ENCODE measurements at regions of chrX and their contacts with region 1.

Region 1: GRCh38 chrX:108070891-108071290 is 20.5 kb downstream of the PSMD10 start:
- DNase-seq: no peak
- ATAC-seq: no peak
- H3K4me3 ChIP-seq: no peak overlapping the region
- H3K4me3 Mint-ChIP-seq: no peak overlapping the region
- H3K27ac ChIP-seq: no peak overlapping the region
- H3K27ac Mint-ChIP-seq: peak overlapping the region; percentile 39
- H3K4me1 ChIP-seq: no peaks in the 10 kb centered on the region
- H3K4me1 Mint-ChIP-seq: peaks cover 9% of the 10 kb centered on the region
- H3K27me3 ChIP-seq: no peaks in the 10 kb centered on the region
- H3K27me3 Mint-ChIP-seq: no peaks in the 10 kb centered on the region
- CTCF ChIP-seq: no peak

Region 2: DNA sequence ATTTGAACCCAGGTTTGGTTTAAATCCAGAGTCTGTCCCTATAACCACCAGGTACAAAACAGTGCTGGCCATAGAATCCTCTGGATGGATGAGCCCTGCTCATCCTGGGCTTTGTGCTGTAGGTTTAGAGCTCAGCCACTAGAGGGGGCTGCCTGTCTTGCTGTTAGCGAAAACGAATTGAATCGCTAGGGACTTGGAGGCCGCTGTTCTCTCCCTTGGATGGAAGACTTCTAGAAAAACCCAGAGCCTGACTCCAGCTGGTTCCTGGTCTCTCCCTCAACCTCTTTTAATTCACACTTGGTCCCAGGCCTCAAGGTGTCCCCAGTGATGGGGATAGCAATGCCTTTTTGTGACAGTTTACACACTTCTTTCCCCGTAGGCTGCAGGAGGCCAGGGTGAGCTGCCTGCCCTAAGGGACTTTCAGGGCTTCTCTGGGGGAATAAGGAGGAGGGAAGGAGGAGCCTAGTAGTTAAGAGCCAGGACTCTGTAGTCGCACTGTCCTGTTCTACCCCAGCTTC is 1176.4 kb before region 1 on chrX:
- CTCF ChIA-PET with region 1: no interaction called
- POLR2A ChIA-PET with region 1: no interaction called
- intact Hi-C with region 1: loop called (anchors 10 kb)
- DNase-seq: peak; percentile 12 to 67 (median 26)
- ATAC-seq: peak; percentile 62
- H3K4me3 ChIP-seq: no peak overlapping the region
- H3K4me3 Mint-ChIP-seq: no peak overlapping the region
- H3K27ac ChIP-seq: no peak overlapping the region
- H3K27ac Mint-ChIP-seq: no peak overlapping the region
- H3K4me1 ChIP-seq: no peaks in the 10 kb centered on the region
- H3K4me1 Mint-ChIP-seq: no peaks in the 10 kb centered on the region
- H3K27me3 ChIP-seq: peaks cover 0 to 3% of the 10 kb centered on the region in 2 experiments
- H3K27me3 Mint-ChIP-seq: peaks cover 21% of the 10 kb centered on the region
- CTCF ChIP-seq: peak; percentile 54

Region 3: DNA sequence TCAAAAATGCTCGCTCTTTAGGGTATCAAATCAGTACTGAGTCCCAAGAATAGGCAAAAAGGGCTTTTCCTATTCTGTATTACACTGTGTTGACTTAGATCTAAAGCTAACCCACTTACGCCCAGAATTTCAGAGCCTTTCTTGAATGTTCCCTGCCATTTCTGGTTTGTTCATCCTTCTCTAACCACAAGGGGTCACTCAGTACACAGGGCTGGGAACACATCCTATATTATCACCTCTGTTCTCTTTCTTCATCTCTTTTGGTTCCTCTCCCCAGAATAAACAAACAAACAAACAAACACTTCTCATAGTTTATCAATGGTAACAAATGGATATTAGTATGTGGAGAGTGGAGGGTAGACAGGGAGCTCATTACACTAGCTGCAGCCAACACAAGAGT is 1045.3 kb before region 1 on chrX:
- CTCF ChIA-PET with region 1: no interaction called
- POLR2A ChIA-PET with region 1: no interaction called
- intact Hi-C with region 1: loop called in 1 of 2 experiments (anchors 10 kb)
- DNase-seq: peak in 3 of 14 experiments; percentile 12 to 24 (median 23)
- ATAC-seq: no peak
- H3K4me3 ChIP-seq: no peak overlapping the region
- H3K4me3 Mint-ChIP-seq: no peak overlapping the region
- H3K27ac ChIP-seq: no peak overlapping the region
- H3K27ac Mint-ChIP-seq: no peak overlapping the region
- H3K4me1 ChIP-seq: no peaks in the 10 kb centered on the region
- H3K4me1 Mint-ChIP-seq: no peaks in the 10 kb centered on the region
- H3K27me3 ChIP-seq: no peaks in the 10 kb centered on the region
- H3K27me3 Mint-ChIP-seq: peaks cover 5% of the 10 kb centered on the region
- CTCF ChIP-seq: peak; percentile 38

Region 4: DNA sequence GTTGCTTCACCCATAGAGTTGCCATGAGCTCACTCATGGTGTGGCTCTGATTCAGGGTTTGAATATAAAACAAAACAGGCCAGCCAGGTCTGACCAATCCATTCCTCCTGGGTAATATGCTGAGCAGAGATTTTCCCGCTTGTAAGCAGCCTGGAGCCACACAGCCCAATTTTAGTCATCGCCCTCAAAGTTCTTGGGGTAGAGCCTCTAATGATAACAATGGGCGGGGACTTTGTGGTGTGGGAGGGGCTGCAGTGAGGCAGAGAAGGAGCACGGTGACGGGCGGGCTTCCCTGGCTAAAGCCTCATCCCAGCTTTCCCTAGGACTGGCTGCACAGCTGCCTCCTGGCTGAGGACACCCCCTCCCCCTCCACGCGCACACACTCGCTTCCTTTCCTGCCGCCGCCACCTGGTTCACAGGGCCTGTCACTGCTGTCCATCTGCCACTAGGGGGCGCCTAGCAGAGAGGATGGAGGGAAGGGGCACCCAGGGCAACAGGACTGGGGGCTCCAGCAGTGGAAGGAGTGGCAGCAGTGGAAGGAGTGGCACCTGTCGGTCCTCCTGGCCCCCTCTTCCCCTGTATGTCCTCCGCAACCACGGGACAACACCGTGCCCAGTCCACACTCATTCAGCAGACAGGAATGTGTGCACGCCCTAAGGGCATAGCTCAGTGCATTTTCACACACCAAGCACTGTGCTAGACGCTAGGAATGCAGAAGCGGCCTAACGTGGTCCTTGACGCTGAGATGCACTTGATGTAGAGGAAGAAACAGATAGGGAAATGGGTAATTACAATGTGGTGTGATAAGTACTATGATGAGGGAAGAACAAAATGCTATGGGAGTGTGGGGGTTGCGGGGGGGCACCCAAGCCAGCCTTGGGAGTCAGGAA is 415.8 kb before region 1 on chrX:
- CTCF ChIA-PET with region 1: interaction called, 3 read pairs
- POLR2A ChIA-PET with region 1: no interaction called
- intact Hi-C with region 1: loop called (anchors 2 to 5 kb)
- DNase-seq: peak; percentile 49 to 81 (median 64)
- ATAC-seq: peak; percentile 92
- H3K4me3 ChIP-seq: no peak overlapping the region
- H3K4me3 Mint-ChIP-seq: no peak overlapping the region
- H3K27ac ChIP-seq: no peak overlapping the region
- H3K27ac Mint-ChIP-seq: peak overlapping the region; percentile 13
- H3K4me1 ChIP-seq: peaks cover 12% of the 10 kb centered on the region
- H3K4me1 Mint-ChIP-seq: peaks cover 29% of the 10 kb centered on the region
- H3K27me3 ChIP-seq: no peaks in the 10 kb centered on the region
- H3K27me3 Mint-ChIP-seq: no peaks in the 10 kb centered on the region
- CTCF ChIP-seq: peak; percentile 72

Region 5: DNA sequence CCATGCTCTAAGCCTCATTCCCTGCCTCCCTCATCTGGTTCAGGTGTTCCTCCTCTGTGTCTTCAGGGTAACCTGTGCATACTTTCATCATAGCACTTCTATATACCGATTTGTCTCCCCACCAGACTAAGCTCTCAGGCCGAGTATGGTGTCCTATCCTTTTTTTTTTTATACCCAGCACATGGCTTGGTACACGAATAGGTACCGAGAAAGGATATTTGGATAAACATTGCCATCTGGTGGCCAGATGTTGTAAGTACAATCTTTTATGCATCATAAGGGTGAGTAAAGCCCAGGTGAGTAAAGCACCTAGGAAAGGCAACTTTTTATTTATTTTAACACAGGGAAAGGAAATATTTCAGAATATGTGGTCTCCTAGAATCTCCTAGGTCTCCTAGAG is 176.9 kb before region 1 on chrX:
- CTCF ChIA-PET with region 1: no interaction called
- POLR2A ChIA-PET with region 1: no interaction called
- intact Hi-C with region 1: loop called in 1 of 2 experiments (anchors 1 kb)
- DNase-seq: peak in 6 of 14 experiments; percentile 1 to 73 (median 54)
- ATAC-seq: peak; percentile 76
- H3K4me3 ChIP-seq: no peak overlapping the region
- H3K4me3 Mint-ChIP-seq: no peak overlapping the region
- H3K27ac ChIP-seq: no peak overlapping the region
- H3K27ac Mint-ChIP-seq: no peak overlapping the region
- H3K4me1 ChIP-seq: no peaks in the 10 kb centered on the region
- H3K4me1 Mint-ChIP-seq: no peaks in the 10 kb centered on the region
- H3K27me3 ChIP-seq: no peaks in the 10 kb centered on the region
- H3K27me3 Mint-ChIP-seq: no peaks in the 10 kb centered on the region
- CTCF ChIP-seq: peak; percentile 69

Region 6: DNA sequence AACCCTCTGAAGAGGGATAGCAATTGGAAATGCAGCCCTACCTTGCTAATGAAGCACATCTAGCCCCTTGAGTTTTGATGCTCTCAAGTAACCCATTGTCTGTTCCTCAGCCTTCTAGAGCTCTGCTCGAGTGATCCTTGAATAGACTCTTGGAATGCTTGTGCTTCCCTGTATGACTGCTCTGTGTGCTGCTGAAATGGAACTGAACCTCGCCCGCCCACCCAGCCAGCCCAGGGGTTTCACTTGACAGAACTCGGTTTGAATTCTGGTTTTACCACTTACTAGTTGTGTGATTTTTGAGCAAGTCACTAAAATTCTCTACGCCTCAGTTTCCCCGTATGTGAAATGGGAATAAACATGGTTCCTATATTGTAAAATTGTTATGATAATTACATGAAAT is 168.2 kb before region 1 on chrX:
- CTCF ChIA-PET with region 1: no interaction called
- POLR2A ChIA-PET with region 1: no interaction called
- intact Hi-C with region 1: loop called in 1 of 2 experiments (anchors 10 kb)
- DNase-seq: no peak
- ATAC-seq: no peak
- H3K4me3 ChIP-seq: no peak overlapping the region
- H3K4me3 Mint-ChIP-seq: no peak overlapping the region
- H3K27ac ChIP-seq: no peak overlapping the region
- H3K27ac Mint-ChIP-seq: no peak overlapping the region
- H3K4me1 ChIP-seq: no peaks in the 10 kb centered on the region
- H3K4me1 Mint-ChIP-seq: no peaks in the 10 kb centered on the region
- H3K27me3 ChIP-seq: no peaks in the 10 kb centered on the region
- H3K27me3 Mint-ChIP-seq: no peaks in the 10 kb centered on the region
- CTCF ChIP-seq: no peak

Region 7: GRCh38 chrX:108020631-108021030 is 50.3 kb before region 1 on chrX:
- CTCF ChIA-PET with region 1: interaction called, 4 read pairs
- POLR2A ChIA-PET with region 1: no interaction called
- intact Hi-C with region 1: loop called (anchors 1 to 2 kb)
- DNase-seq: peak in 6 of 14 experiments; percentile 5 to 56 (median 34)
- ATAC-seq: no peak
- H3K4me3 ChIP-seq: peak overlapping the region; percentile 62
- H3K4me3 Mint-ChIP-seq: peak overlapping the region; percentile 83
- H3K27ac ChIP-seq: peak overlapping the region; percentile 35 to 77
- H3K27ac Mint-ChIP-seq: peak overlapping the region; percentile 100
- H3K4me1 ChIP-seq: peaks cover 34% of the 10 kb centered on the region
- H3K4me1 Mint-ChIP-seq: peaks cover 91% of the 10 kb centered on the region
- H3K27me3 ChIP-seq: no peaks in the 10 kb centered on the region
- H3K27me3 Mint-ChIP-seq: no peaks in the 10 kb centered on the region
- CTCF ChIP-seq: peak; percentile 65

Measured in CD4-positive, alpha-beta T cell (primary cell).